Naive thymus-derived CD4-positive, alpha-beta T cell (primary cell): ENCODE measurements at regions of chr22 and their contacts with region 1.

Region 1: GRCh38 chr22:31496007-31496734 is at the start of gene SFI1:
- DNase-seq: peak; percentile 91 to 98 (median 96)
- ATAC-seq: peak; percentile 93
- H3K4me3 ChIP-seq: peak within 1 kb of the TSS; percentile 83
- H3K4me3 Mint-ChIP-seq: peak within 1 kb of the TSS; percentile 85 to 99 (median 96)
- H3K27ac ChIP-seq: peak within 1 kb of the TSS; percentile 92
- H3K27ac Mint-ChIP-seq: peak within 1 kb of the TSS; percentile 92 to 99 (median 98)
- H3K4me1 ChIP-seq: peaks cover 18 to 20% of the 10 kb centered on the region in 2 donors
- H3K4me1 Mint-ChIP-seq: peaks cover 7 to 50% (median 43%) of the 10 kb centered on the region in 7 donors
- H3K27me3 ChIP-seq: no peaks in the 10 kb centered on the region
- H3K27me3 Mint-ChIP-seq: no peaks in the 10 kb centered on the region
- total RNA-seq, gene SFI1: 196 to 359 (median 343) TPM

Region 2: DNA sequence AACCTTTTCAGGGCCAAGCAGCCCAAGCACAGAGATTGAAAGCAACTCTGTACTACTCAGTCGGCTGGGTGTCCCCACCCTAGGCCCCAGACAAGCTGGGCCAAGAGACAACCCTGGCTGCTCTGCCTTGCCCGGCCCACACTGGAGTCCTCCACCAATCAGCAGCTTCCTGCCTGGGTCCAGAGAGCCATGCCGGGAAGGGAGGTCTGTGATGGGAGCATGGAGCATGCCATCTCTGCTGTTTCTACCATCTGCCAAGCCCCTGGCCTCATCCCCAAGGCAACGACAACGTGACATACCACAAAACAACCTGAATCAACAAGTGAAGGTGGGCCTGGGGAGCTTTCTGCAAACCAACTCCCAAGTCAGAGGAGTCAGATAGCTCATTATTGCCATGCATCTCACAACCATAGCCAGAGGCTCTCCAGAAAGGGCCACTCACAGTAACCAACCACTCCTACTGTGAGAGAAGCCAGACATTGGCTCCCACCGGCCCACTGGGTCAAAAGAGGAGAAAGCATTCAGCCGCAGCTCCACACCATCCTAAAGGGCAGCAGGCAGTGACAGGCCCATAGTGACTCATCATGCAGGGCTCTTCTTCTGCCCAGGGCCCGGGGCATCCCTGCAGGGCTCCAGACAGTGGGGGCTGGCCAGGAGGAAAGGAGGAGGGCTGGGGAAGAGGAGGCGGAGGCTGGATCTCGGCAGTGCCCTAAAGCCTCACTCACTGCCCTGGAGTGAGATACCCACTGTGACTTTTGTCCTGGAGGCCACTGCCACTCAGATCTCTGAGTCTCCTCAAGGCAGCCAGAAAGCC is 168.1 kb before region 1 on chr22:
- CTCF ChIA-PET with region 1: no interaction called
- POLR2A ChIA-PET with region 1: no interaction called
- intact Hi-C with region 1: no loop called
- DNase-seq: no peak
- ATAC-seq: no peak
- H3K4me3 ChIP-seq: no peak overlapping the region
- H3K4me3 Mint-ChIP-seq: no peak overlapping the region
- H3K27ac ChIP-seq: no peak overlapping the region
- H3K27ac Mint-ChIP-seq: peak overlapping the region in 8 of 9 donors; percentile 38 to 81 (median 64)
- H3K4me1 ChIP-seq: no peaks in the 10 kb centered on the region
- H3K4me1 Mint-ChIP-seq: peaks cover 12 to 36% (median 28%) of the 10 kb centered on the region in 7 donors
- H3K27me3 ChIP-seq: no peaks in the 10 kb centered on the region
- H3K27me3 Mint-ChIP-seq: no peaks in the 10 kb centered on the region

Region 3: GRCh38 chr22:31399211-31400028 is 96.8 kb before region 1 on chr22 and contains the start of gene DRG1:
- CTCF ChIA-PET with region 1: no interaction called
- POLR2A ChIA-PET with region 1: interaction called, 4 read pairs
- intact Hi-C with region 1: loop called (anchors 2 kb)
- DNase-seq: peak; percentile 90 to 98 (median 93)
- ATAC-seq: peak; percentile 99
- H3K4me3 ChIP-seq: peak within 1 kb of the TSS; percentile 88
- H3K4me3 Mint-ChIP-seq: peak within 1 kb of the TSS; percentile 92 to 99 (median 96)
- H3K27ac ChIP-seq: peak within 1 kb of the TSS; percentile 91
- H3K27ac Mint-ChIP-seq: peak within 1 kb of the TSS; percentile 85 to 97 (median 94)
- H3K4me1 ChIP-seq: peaks cover 10 to 15% of the 10 kb centered on the region in 2 donors
- H3K4me1 Mint-ChIP-seq: peaks cover 5 to 35% (median 22%) of the 10 kb centered on the region in 7 donors
- H3K27me3 ChIP-seq: no peaks in the 10 kb centered on the region
- H3K27me3 Mint-ChIP-seq: no peaks in the 10 kb centered on the region
- total RNA-seq, gene DRG1: 53.3 to 109 (median 84.4) TPM

Region 4: GRCh38 chr22:31509061-31509762 is 13.0 kb after region 1 on chr22:
- CTCF ChIA-PET with region 1: no interaction called
- POLR2A ChIA-PET with region 1: no interaction called
- intact Hi-C with region 1: loop called in 1 of 2 experiments (anchors 2 kb)
- DNase-seq: no peak
- ATAC-seq: no peak
- H3K4me3 ChIP-seq: no peak overlapping the region
- H3K4me3 Mint-ChIP-seq: peak overlapping the region in 1 of 10 donors; percentile 13
- H3K27ac ChIP-seq: no peak overlapping the region
- H3K27ac Mint-ChIP-seq: peak overlapping the region in 7 of 9 donors; percentile 15 to 72 (median 33)
- H3K4me1 ChIP-seq: peaks cover 5 to 9% of the 10 kb centered on the region in 2 donors
- H3K4me1 Mint-ChIP-seq: peaks cover 13 to 62% (median 54%) of the 10 kb centered on the region in 7 donors
- H3K27me3 ChIP-seq: no peaks in the 10 kb centered on the region
- H3K27me3 Mint-ChIP-seq: no peaks in the 10 kb centered on the region

Region 5: GRCh38 chr22:31537019-31537535 is 40.9 kb after region 1 on chr22:
- CTCF ChIA-PET with region 1: no interaction called
- POLR2A ChIA-PET with region 1: interaction called, 3 read pairs
- intact Hi-C with region 1: loop called (anchors 5 kb)
- DNase-seq: peak in 1 of 9 donors; percentile 62
- ATAC-seq: no peak
- H3K4me3 ChIP-seq: no peak overlapping the region
- H3K4me3 Mint-ChIP-seq: peak overlapping the region in 1 of 10 donors; percentile 81
- H3K27ac ChIP-seq: no peak overlapping the region
- H3K27ac Mint-ChIP-seq: peak overlapping the region in 6 of 9 donors; percentile 27 to 94 (median 58)
- H3K4me1 ChIP-seq: peaks cover 0 to 5% of the 10 kb centered on the region in 2 donors
- H3K4me1 Mint-ChIP-seq: peaks cover 7 to 57% (median 23%) of the 10 kb centered on the region in 7 donors
- H3K27me3 ChIP-seq: no peaks in the 10 kb centered on the region
- H3K27me3 Mint-ChIP-seq: no peaks in the 10 kb centered on the region